ENCODE measurements at regions of chr11 and their contacts with region 1.

Region 1: DNA sequence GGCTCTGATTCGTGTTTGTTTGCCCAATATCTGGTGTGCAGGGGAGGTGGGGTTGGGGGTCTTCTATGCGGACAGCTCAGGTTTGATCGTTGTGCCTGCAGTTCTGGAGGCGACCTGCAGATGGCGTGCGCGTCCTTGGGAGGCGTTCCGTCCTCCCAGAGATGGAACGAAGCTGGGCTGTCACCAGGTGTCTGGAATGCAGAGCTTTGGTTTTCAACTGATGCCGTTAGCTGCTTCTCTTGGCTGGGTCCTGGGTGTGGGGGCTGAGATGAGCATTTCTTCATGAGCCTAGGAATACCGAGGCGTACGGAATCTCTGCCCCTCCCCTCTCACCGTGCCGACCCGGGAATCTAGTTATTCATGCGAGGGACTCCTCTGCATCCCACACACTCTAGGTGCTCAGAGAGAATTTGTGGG is 98.6 kb downstream of the CEP164 start:
- DNase-seq: peak; percentile 79
- ATAC-seq: peak; percentile 79
- H3K4me3 Mint-ChIP-seq: no peak overlapping the region
- H3K27ac Mint-ChIP-seq: no peak overlapping the region
- H3K4me1 Mint-ChIP-seq: no peaks in the 10 kb centered on the region
- H3K27me3 Mint-ChIP-seq: peaks cover 2% of the 10 kb centered on the region
- CTCF ChIP-seq: peak; percentile 98

Region 2: GRCh38 chr11:117334896-117335295 is 91.4 kb before region 1 on chr11:
- CTCF ChIA-PET with region 1: no interaction called
- POLR2A ChIA-PET with region 1: no interaction called
- intact Hi-C with region 1: no loop called
- DNase-seq: no peak
- ATAC-seq: no peak
- H3K4me3 Mint-ChIP-seq: no peak overlapping the region
- H3K27ac Mint-ChIP-seq: no peak overlapping the region
- H3K4me1 Mint-ChIP-seq: peaks cover 4% of the 10 kb centered on the region
- H3K27me3 Mint-ChIP-seq: no peaks in the 10 kb centered on the region
- CTCF ChIP-seq: no peak

Region 3: DNA sequence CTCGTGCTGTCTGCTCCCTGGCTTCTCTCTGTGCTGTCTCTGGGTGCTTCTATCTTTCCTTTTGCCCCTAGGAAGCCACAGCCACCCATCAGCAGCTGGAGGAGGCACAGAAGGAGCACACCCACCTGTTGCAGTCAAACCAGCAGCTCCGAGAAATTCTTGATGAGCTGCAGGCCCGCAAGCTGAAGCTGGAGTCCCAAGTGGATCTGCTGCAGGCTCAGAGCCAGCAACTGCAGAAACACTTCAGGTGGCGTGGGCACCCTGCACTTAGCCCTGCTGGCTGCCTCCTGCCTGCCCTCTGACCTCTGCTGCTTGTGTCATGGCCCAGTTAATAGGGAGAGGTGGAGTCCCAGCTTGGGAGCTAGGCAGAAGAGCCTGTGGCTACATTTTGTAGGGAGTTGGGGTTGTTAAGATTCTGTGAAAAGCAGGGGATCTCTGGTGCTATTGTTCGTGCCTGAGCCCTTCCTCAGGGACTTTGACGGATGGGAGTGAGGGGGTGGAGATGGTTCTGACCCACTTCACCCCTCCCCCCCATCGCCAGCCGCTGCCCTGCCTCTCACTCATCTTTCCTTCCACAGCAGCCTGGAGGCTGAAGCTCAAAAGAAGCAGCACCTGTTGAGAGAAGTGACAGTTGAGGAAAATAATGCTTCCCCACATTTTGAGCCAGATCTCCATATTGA is 30.7 kb before region 1 on chr11:
- CTCF ChIA-PET with region 1: interaction called, 15 read pairs
- POLR2A ChIA-PET with region 1: no interaction called
- intact Hi-C with region 1: no loop called
- DNase-seq: no peak
- ATAC-seq: no peak
- H3K4me3 Mint-ChIP-seq: no peak overlapping the region
- H3K27ac Mint-ChIP-seq: no peak overlapping the region
- H3K4me1 Mint-ChIP-seq: no peaks in the 10 kb centered on the region
- H3K27me3 Mint-ChIP-seq: no peaks in the 10 kb centered on the region
- CTCF ChIP-seq: no peak

Region 4: GRCh38 chr11:117443266-117444195 is 17.3 kb after region 1 on chr11:
- CTCF ChIA-PET with region 1: interaction called, 25 read pairs
- POLR2A ChIA-PET with region 1: interaction called, 3 read pairs
- intact Hi-C with region 1: no loop called
- DNase-seq: peak; percentile 25
- ATAC-seq: peak; percentile 42
- H3K4me3 Mint-ChIP-seq: no peak overlapping the region
- H3K27ac Mint-ChIP-seq: no peak overlapping the region
- H3K4me1 Mint-ChIP-seq: no peaks in the 10 kb centered on the region
- H3K27me3 Mint-ChIP-seq: peaks cover 5% of the 10 kb centered on the region
- CTCF ChIP-seq: peak; percentile 29

Region 5: GRCh38 chr11:117473481-117474096 is 47.3 kb after region 1 on chr11:
- CTCF ChIA-PET with region 1: interaction called, 17 read pairs
- POLR2A ChIA-PET with region 1: no interaction called
- intact Hi-C with region 1: no loop called
- DNase-seq: no peak
- ATAC-seq: no peak
- H3K4me3 Mint-ChIP-seq: no peak overlapping the region
- H3K27ac Mint-ChIP-seq: no peak overlapping the region
- H3K4me1 Mint-ChIP-seq: no peaks in the 10 kb centered on the region
- H3K27me3 Mint-ChIP-seq: no peaks in the 10 kb centered on the region
- CTCF ChIP-seq: no peak

Region 6: GRCh38 chr11:117498746-117499145 is 72.5 kb after region 1 on chr11:
- CTCF ChIA-PET with region 1: interaction called, 12 read pairs
- POLR2A ChIA-PET with region 1: no interaction called
- intact Hi-C with region 1: no loop called
- DNase-seq: no peak
- ATAC-seq: no peak
- H3K4me3 Mint-ChIP-seq: no peak overlapping the region
- H3K27ac Mint-ChIP-seq: no peak overlapping the region
- H3K4me1 Mint-ChIP-seq: no peaks in the 10 kb centered on the region
- H3K27me3 Mint-ChIP-seq: no peaks in the 10 kb centered on the region
- CTCF ChIP-seq: no peak

Region 7: GRCh38 chr11:117528097-117528721 is 101.9 kb after region 1 on chr11:
- CTCF ChIA-PET with region 1: interaction called, 13 read pairs
- POLR2A ChIA-PET with region 1: no interaction called
- intact Hi-C with region 1: no loop called
- DNase-seq: no peak
- ATAC-seq: no peak
- H3K4me3 Mint-ChIP-seq: no peak overlapping the region
- H3K27ac Mint-ChIP-seq: no peak overlapping the region
- H3K4me1 Mint-ChIP-seq: no peaks in the 10 kb centered on the region
- H3K27me3 Mint-ChIP-seq: no peaks in the 10 kb centered on the region
- CTCF ChIP-seq: no peak

Region 8: DNA sequence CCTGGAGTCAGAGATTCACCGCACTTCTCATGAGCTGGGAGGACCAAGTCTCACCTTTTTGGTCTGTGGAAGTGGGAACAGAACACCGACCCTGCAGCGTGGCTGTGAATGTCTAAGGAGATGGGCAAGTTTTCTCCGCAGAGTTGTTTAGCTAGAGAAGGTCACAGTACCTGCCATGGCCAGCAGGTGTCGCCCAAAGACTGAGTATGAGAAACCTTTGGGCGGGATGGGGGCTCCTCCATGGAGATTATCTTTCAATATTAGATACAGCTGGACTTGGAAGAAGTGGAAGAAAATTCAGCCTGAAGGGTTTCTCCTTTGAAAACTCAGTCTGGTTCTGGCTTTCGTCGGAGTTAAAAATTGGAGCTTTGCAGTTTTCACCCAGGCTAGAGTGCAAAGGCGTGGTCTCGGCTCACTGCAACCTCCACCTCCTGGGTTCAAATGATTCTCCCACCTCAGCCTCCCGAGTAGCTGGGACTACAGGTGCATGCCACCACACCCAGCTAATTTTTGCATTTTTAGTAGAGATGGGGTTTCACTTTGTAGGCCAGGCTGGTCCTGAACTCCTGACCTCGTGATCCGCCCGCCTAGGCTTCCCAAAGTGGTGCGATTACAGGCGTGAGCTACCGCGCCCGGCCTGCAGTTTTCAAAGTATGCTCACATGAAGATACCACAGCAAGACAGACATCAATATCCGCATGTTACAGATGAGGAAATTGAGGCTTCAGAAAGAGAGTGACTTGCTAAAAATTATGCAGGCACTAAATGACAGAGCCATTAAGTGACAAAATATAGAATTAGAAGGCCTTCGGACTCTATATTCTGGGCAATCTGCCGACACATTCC is 381.4 kb after region 1 on chr11:
- CTCF ChIA-PET with region 1: interaction called, 11 read pairs
- POLR2A ChIA-PET with region 1: no interaction called
- intact Hi-C with region 1: no loop called
- DNase-seq: peak; percentile 91
- ATAC-seq: peak; percentile 74
- H3K4me3 Mint-ChIP-seq: no peak overlapping the region
- H3K27ac Mint-ChIP-seq: no peak overlapping the region
- H3K4me1 Mint-ChIP-seq: peaks cover 16% of the 10 kb centered on the region
- H3K27me3 Mint-ChIP-seq: no peaks in the 10 kb centered on the region
- CTCF ChIP-seq: peak; percentile 99

Measured in activated CD8-positive, alpha-beta T cell treated with anti-CD3 and anti-CD28 coated beads for 36 hours (primary cell).